ENCODE measurements at regions of chr2 and their contacts with region 1.

Region 1: GRCh38 chr2:160429248-160430000 is 64.2 kb downstream of the RBMS1 start:
- DNase-seq: peak in 3 of 14 experiments; percentile 79 to 81 (median 81)
- ATAC-seq: peak; percentile 42
- H3K4me3 ChIP-seq: no peak overlapping the region
- H3K4me3 Mint-ChIP-seq: peak overlapping the region; percentile 12
- H3K27ac ChIP-seq: peak overlapping the region in 1 of 2 donors; percentile 58
- H3K27ac Mint-ChIP-seq: peak overlapping the region; percentile 88
- H3K4me1 ChIP-seq: peaks cover 17% of the 10 kb centered on the region
- H3K4me1 Mint-ChIP-seq: peaks cover 80% of the 10 kb centered on the region
- H3K27me3 ChIP-seq: no peaks in the 10 kb centered on the region
- H3K27me3 Mint-ChIP-seq: no peaks in the 10 kb centered on the region
- CTCF ChIP-seq: peak; percentile 78

Region 2: DNA sequence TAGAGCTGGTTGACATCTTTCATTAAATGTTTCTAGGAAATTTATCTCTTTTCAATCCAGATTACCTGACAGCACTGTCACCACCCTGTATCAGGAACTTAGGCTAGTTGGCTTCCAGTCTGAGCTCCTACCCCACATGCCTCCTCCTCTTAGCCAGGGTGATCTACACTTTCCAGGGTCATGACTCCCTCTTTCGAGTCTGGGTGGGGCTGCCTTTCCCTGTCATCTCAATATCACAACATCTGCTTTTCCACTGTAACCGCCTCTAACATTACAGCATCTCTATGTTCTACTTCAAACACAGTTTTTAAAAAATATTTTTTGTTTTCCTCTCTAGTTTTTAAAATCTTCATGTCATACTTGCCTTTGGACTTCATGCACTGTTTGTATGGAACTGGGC is 65.1 kb before region 1 on chr2:
- CTCF ChIA-PET with region 1: no interaction called
- POLR2A ChIA-PET with region 1: no interaction called
- intact Hi-C with region 1: no loop called
- DNase-seq: no peak
- ATAC-seq: no peak
- H3K4me3 ChIP-seq: no peak overlapping the region
- H3K4me3 Mint-ChIP-seq: no peak overlapping the region
- H3K27ac ChIP-seq: no peak overlapping the region
- H3K27ac Mint-ChIP-seq: peak overlapping the region; percentile 3
- H3K4me1 ChIP-seq: peaks cover 22% of the 10 kb centered on the region
- H3K4me1 Mint-ChIP-seq: peaks cover 91% of the 10 kb centered on the region
- H3K27me3 ChIP-seq: no peaks in the 10 kb centered on the region
- H3K27me3 Mint-ChIP-seq: no peaks in the 10 kb centered on the region
- CTCF ChIP-seq: no peak

Region 3: DNA sequence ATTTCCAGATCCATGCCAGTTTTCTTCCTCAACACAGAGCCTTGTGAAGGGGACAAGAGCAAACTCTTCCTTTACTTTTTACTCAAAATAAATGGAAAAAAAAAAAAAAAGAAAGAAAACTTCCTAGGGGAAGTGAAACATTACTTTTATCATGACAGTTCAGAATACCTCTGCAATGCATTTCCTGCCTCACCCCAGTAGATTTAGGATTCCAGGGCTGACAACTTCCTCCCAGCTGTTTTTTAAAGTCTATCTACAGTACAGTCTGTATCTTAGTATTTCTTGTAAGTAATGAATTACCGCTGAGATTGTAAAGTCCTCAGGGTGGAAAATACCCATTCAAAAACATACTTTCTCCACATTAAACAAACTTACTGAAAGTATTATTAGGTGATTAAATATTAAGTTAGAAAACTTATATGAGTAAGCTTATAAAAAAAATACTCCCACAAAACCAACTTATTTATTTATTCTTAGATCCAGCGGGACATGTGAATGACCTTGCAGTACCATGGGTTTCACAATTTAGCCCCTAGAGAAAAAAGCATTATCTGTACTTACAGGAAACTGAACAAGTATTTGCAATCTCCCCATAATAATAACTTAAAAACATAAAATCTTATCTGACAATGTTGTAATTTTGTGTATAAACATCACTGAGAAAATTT is 53.5 kb before region 1 on chr2:
- CTCF ChIA-PET with region 1: no interaction called
- POLR2A ChIA-PET with region 1: interaction called, 3 read pairs
- intact Hi-C with region 1: loop called in 1 of 2 experiments (anchors 10 kb)
- DNase-seq: peak in 2 of 14 experiments; percentile 41 to 47
- ATAC-seq: peak; percentile 79
- H3K4me3 ChIP-seq: no peak overlapping the region
- H3K4me3 Mint-ChIP-seq: peak overlapping the region; percentile 62
- H3K27ac ChIP-seq: no peak overlapping the region
- H3K27ac Mint-ChIP-seq: peak overlapping the region; percentile 72
- H3K4me1 ChIP-seq: peaks cover 63% of the 10 kb centered on the region
- H3K4me1 Mint-ChIP-seq: peaks cover 98% of the 10 kb centered on the region
- H3K27me3 ChIP-seq: no peaks in the 10 kb centered on the region
- H3K27me3 Mint-ChIP-seq: no peaks in the 10 kb centered on the region
- CTCF ChIP-seq: no peak

Region 4: GRCh38 chr2:160394153-160394552 is 35.3 kb before region 1 on chr2:
- CTCF ChIA-PET with region 1: no interaction called
- POLR2A ChIA-PET with region 1: interaction called, 5 read pairs
- intact Hi-C with region 1: loop called in 1 of 2 experiments (anchors 5 kb)
- DNase-seq: peak in 3 of 14 experiments; percentile 66 to 81 (median 70)
- ATAC-seq: peak; percentile 94
- H3K4me3 ChIP-seq: no peak overlapping the region
- H3K4me3 Mint-ChIP-seq: peak overlapping the region; percentile 15
- H3K27ac ChIP-seq: no peak overlapping the region
- H3K27ac Mint-ChIP-seq: peak overlapping the region; percentile 64
- H3K4me1 ChIP-seq: peaks cover 63% of the 10 kb centered on the region
- H3K4me1 Mint-ChIP-seq: peaks cover 59% of the 10 kb centered on the region
- H3K27me3 ChIP-seq: no peaks in the 10 kb centered on the region
- H3K27me3 Mint-ChIP-seq: no peaks in the 10 kb centered on the region
- CTCF ChIP-seq: no peak

Region 5: GRCh38 chr2:160411955-160412354 is 17.5 kb before region 1 on chr2:
- CTCF ChIA-PET with region 1: interaction called, 13 read pairs
- POLR2A ChIA-PET with region 1: interaction called, 65 read pairs
- intact Hi-C with region 1: loop called in 1 of 2 experiments (anchors 2 kb)
- DNase-seq: peak in 1 of 14 experiments; percentile 29
- ATAC-seq: no peak
- H3K4me3 ChIP-seq: peak overlapping the region; percentile 2
- H3K4me3 Mint-ChIP-seq: peak overlapping the region; percentile 66
- H3K27ac ChIP-seq: peak overlapping the region; percentile 31 to 38
- H3K27ac Mint-ChIP-seq: peak overlapping the region; percentile 85
- H3K4me1 ChIP-seq: peaks cover 28% of the 10 kb centered on the region
- H3K4me1 Mint-ChIP-seq: peaks cover 75% of the 10 kb centered on the region
- H3K27me3 ChIP-seq: no peaks in the 10 kb centered on the region
- H3K27me3 Mint-ChIP-seq: no peaks in the 10 kb centered on the region
- CTCF ChIP-seq: no peak

Region 6: GRCh38 chr2:160417745-160418397 is 11.6 kb before region 1 on chr2:
- CTCF ChIA-PET with region 1: interaction called, 12 read pairs
- POLR2A ChIA-PET with region 1: interaction called, 49 read pairs
- intact Hi-C with region 1: loop called in 1 of 2 experiments (anchors 1 kb)
- DNase-seq: peak in 4 of 14 experiments; percentile 32 to 68 (median 54)
- ATAC-seq: peak; percentile 95
- H3K4me3 ChIP-seq: no peak overlapping the region
- H3K4me3 Mint-ChIP-seq: peak overlapping the region; percentile 11
- H3K27ac ChIP-seq: no peak overlapping the region
- H3K27ac Mint-ChIP-seq: peak overlapping the region; percentile 65
- H3K4me1 ChIP-seq: peaks cover 10% of the 10 kb centered on the region
- H3K4me1 Mint-ChIP-seq: peaks cover 81% of the 10 kb centered on the region
- H3K27me3 ChIP-seq: no peaks in the 10 kb centered on the region
- H3K27me3 Mint-ChIP-seq: no peaks in the 10 kb centered on the region
- CTCF ChIP-seq: no peak

Region 7: GRCh38 chr2:160482673-160483072 is 53.2 kb after region 1 on chr2:
- CTCF ChIA-PET with region 1: interaction called, 4 read pairs
- POLR2A ChIA-PET with region 1: interaction called, 14 read pairs
- intact Hi-C with region 1: no loop called
- DNase-seq: peak in 9 of 14 experiments; percentile 4 to 87 (median 35)
- ATAC-seq: peak; percentile 94
- H3K4me3 ChIP-seq: no peak overlapping the region
- H3K4me3 Mint-ChIP-seq: peak overlapping the region; percentile 68
- H3K27ac ChIP-seq: peak overlapping the region; percentile 39 to 55
- H3K27ac Mint-ChIP-seq: peak overlapping the region; percentile 85
- H3K4me1 ChIP-seq: peaks cover 41% of the 10 kb centered on the region
- H3K4me1 Mint-ChIP-seq: peaks cover 90% of the 10 kb centered on the region
- H3K27me3 ChIP-seq: no peaks in the 10 kb centered on the region
- H3K27me3 Mint-ChIP-seq: no peaks in the 10 kb centered on the region
- CTCF ChIP-seq: no peak

Region 8: GRCh38 chr2:160493227-160494028 is 64.0 kb after region 1 on chr2 and contains the start of gene RBMS1:
- CTCF ChIA-PET with region 1: interaction called, 4 read pairs
- POLR2A ChIA-PET with region 1: interaction called, 18 read pairs
- intact Hi-C with region 1: loop called in 1 of 2 experiments (anchors 2 kb)
- DNase-seq: peak; percentile 25 to 79 (median 47)
- ATAC-seq: peak; percentile 51
- H3K4me3 ChIP-seq: peak within 1 kb of the TSS; percentile 66
- H3K4me3 Mint-ChIP-seq: peak within 1 kb of the TSS; percentile 98
- H3K27ac ChIP-seq: peak within 1 kb of the TSS; percentile 65 to 90
- H3K27ac Mint-ChIP-seq: peak within 1 kb of the TSS; percentile 88
- H3K4me1 ChIP-seq: peaks cover 12% of the 10 kb centered on the region
- H3K4me1 Mint-ChIP-seq: peaks cover 58% of the 10 kb centered on the region
- H3K27me3 ChIP-seq: no peaks in the 10 kb centered on the region
- H3K27me3 Mint-ChIP-seq: no peaks in the 10 kb centered on the region
- CTCF ChIP-seq: no peak
- total RNA-seq, gene RBMS1: 88.6 to 90.3 TPM

Measured in CD4-positive, alpha-beta T cell (primary cell).